ENCODE measurements at regions of chr9 and their contacts with region 1.

Region 1: GRCh38 chr9:35646533-35647265 is 4.0 kb downstream of the SIT1 start:
- DNase-seq: peak; percentile 91
- H3K4me3 Mint-ChIP-seq: peak overlapping the region; percentile 96
- H3K27ac Mint-ChIP-seq: peak overlapping the region; percentile 96
- H3K4me1 Mint-ChIP-seq: peaks cover 45% of the 10 kb centered on the region
- H3K27me3 Mint-ChIP-seq: no peaks in the 10 kb centered on the region

Region 2: GRCh38 chr9:35618854-35619799 is 27.6 kb before region 1 on chr9:
- intact Hi-C with region 1: loop called (anchors 2 kb)
- DNase-seq: peak; percentile 28
- H3K4me3 Mint-ChIP-seq: peak overlapping the region; percentile 47
- H3K27ac Mint-ChIP-seq: peak overlapping the region; percentile 95
- H3K4me1 Mint-ChIP-seq: peaks cover 63% of the 10 kb centered on the region
- H3K27me3 Mint-ChIP-seq: no peaks in the 10 kb centered on the region

Region 3: DNA sequence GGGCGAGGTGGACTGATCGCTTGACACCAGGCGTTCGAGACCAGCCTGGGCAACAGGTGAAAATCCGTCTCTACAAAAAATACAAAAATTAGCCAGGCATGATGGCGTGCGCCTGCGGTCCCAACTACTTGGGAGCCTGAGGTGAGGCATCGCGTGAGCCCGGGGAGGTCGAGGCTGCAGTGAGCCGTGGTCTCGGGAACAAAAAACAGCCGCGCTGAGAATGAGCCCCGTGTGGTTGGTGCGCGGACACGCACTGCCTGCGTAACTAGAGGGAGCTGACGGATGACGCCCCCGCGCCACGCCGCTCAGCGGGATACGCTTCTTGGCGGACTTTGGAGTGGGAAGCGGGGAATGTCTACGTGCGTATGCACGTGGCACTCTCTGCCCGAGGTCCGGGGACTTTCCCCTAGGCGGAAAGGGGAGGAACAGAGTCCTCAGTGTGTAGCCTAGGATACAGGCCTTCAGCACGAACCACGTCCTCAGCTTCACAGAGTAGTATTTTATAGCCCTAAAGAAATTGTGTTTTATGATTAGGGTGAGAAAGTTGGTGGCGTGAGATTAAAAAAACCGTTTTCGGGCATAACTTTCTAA is 10.9 kb after region 1 on chr9 and contains the start of gene RMRP:
- intact Hi-C with region 1: loop called (anchors 1 kb)
- DNase-seq: peak; percentile 87
- H3K4me3 Mint-ChIP-seq: peak within 1 kb of the TSS; percentile 85
- H3K27ac Mint-ChIP-seq: peak within 1 kb of the TSS; percentile 98
- H3K4me1 Mint-ChIP-seq: peaks cover 55% of the 10 kb centered on the region
- H3K27me3 Mint-ChIP-seq: peaks cover 3% of the 10 kb centered on the region
- total RNA-seq, gene RMRP: 5,290 and 6,583 TPM in 2 replicates

Region 4: GRCh38 chr9:35696525-35697215 is 50.0 kb after region 1 on chr9:
- intact Hi-C with region 1: loop called (anchors 2 kb)
- DNase-seq: peak; percentile 40
- H3K4me3 Mint-ChIP-seq: no peak overlapping the region
- H3K27ac Mint-ChIP-seq: no peak overlapping the region
- H3K4me1 Mint-ChIP-seq: peaks cover 2% of the 10 kb centered on the region
- H3K27me3 Mint-ChIP-seq: no peaks in the 10 kb centered on the region